Right ventricle myocardium superior (tissue), 1 donor: ENCODE measurements at regions of chr18 and their contacts with region 1.

Region 1: GRCh38 chr18:48030616-48031480 is 100.4 kb upstream of the SMAD2 start:
- DNase-seq: no peak
- ATAC-seq: peak; percentile 87

Region 2: GRCh38 chr18:47635416-47635815 is 395.4 kb before region 1 on chr18:
- intact Hi-C with region 1: no loop called
- DNase-seq: no peak
- ATAC-seq: no peak

Region 3: DNA sequence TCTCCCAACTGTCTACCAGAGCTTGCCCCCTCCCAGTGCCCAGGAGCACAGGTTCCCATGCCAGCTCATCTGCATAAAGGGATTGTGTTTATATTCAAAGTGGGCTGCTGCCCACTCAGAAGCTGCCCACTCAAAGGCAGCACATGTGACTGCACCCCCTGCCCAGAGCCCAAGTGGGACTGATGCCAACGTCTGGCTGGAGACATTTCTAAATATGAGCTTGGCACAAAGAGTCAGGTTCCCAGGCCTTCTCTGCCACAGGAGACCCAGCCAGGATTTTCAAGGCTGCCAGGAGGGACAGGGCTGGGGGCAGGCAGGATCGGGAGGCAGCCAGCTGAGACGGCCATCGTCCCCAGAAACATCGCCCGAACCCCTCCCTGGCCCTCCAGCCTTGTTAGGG is 311.3 kb after region 1 on chr18:
- intact Hi-C with region 1: loop called (anchors 5 kb)
- DNase-seq: no peak
- ATAC-seq: peak; percentile 61

Region 4: DNA sequence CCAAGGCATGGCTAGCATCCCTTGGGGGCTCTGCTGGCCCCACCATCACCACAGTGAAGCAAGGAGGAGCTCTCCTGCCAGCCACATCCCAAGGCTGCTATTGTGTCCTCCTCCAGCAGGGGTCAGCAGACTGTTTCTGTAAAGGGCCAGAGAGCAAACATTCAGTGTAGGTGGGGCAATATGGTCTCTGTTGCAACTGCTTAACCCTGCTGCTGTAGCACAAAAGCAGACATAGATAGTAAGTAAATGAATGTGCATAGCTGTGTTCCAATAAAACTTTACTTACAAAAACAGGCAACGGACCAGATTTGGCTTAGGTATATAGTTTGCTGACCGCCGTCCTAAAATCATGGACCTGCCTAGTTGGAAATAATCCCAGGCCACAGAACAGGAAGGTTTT is 414.7 kb after region 1 on chr18:
- intact Hi-C with region 1: loop called (anchors 2 kb)
- DNase-seq: peak; percentile 79
- ATAC-seq: peak; percentile 80